ENCODE measurements at regions of chr2 and their contacts with region 1.

Region 1: GRCh38 chr2:219498280-219499057 is at the start of gene GMPPA:
- DNase-seq: peak; percentile 95 to 99
- H3K4me3 ChIP-seq: peak within 1 kb of the TSS; percentile 68 to 85
- H3K27ac ChIP-seq: peak within 1 kb of the TSS; percentile 91 to 99
- H3K4me1 ChIP-seq: peaks cover 13 to 26% of the 10 kb centered on the region in 2 donors
- H3K27me3 ChIP-seq: no peaks in the 10 kb centered on the region
- CTCF ChIP-seq: peak in 1 of 3 experiments; percentile 27
- total RNA-seq, gene GMPPA: 11.4 TPM

Region 2: DNA sequence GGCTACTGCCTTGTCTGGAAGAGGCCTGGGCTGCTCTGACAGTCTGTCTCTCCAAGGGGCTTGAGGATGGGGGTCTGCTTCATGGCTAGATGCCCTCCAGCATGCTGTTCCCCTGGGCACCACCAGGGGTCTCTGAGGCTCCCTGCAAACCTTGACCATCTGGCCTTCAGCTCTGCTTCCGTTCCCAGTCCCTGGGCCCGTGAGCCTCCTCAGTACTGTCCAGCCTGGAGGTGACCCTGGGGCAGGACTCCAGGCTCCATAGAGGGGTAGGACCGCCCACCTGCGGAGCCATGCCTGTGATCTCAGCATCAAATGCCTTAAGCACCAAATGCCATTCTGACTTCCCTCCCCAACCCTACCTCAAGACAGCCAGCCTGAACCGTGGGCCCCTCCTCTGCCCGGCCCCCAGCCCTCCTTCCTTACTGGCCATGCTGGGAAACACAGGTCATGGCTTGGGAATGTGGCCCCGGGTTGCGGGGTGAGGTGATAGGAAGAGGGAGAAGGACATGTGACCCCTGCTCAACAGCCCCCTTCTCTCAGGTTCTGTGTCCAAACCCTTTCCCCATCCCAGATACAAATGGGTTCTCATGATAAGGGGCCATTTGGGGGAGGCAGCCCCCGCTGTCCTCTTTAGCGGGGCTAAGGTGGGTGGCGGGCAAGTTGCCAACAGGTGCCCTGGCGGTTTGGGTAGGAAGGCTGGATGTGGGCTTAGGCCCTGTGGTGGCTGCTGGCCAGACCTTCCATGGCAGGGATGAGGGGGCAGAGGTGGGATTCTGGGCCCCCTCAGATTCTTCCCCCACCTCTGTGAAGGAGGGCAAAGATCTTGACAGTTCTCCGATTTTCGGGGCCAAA is 38.8 kb before region 1 on chr2:
- intact Hi-C with region 1: loop called (anchors 1 kb)
- DNase-seq: peak in 1 of 2 donors; percentile 87
- H3K4me3 ChIP-seq: peak overlapping the region in 1 of 2 donors; percentile 42
- H3K27ac ChIP-seq: peak overlapping the region; percentile 91 to 94
- H3K4me1 ChIP-seq: peaks cover 35 to 63% of the 10 kb centered on the region in 2 donors
- H3K27me3 ChIP-seq: no peaks in the 10 kb centered on the region
- CTCF ChIP-seq: peak; percentile 74 to 90 (median 84)

Region 3: DNA sequence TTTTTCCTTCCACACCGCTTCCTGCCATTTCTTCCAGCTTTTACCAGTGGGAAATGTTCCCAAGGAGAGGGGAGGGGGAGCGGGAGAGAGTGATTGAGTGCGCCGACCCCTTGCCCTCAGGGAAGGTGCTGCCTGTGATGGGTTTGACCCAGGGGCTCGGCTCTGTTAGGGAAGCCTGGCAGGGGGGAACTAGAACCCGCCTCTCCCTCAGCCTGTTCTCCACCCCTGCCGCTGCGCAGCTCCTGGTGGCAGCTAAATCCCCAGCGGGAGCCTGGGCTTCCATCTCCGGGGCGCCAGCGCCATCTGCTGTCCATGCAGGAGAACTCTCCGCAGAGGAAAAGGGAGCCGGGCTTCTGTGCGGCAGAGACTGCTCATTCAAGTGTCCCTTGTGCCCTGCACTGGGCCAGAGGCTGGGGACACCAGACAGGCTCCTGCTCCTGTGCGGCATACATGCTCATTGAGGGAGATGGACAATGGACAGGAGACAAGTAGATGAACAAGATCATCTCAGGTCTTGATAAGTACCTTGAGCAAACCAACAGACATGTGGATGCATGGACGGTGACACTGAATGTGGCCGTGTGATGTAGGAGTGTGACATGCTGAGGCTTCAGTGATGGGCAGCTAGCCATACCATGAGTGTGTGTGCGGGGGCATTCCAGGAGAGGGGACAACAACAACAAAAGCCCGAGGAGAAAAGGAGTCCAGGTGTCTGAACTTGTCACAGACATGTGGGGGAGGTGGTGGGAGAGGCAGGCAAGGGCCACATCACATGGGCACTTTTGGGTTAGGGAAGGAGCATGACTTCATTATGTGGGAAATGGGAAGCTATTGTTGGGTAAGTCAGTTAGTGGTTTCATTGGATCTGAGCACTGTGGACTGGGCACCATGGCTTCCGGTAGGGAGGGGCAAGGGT is 31.8 kb after region 1 on chr2:
- intact Hi-C with region 1: loop called (anchors 1 kb)
- DNase-seq: peak in 1 of 2 donors; percentile 88
- H3K4me3 ChIP-seq: peak overlapping the region in 1 of 2 donors; percentile 55
- H3K27ac ChIP-seq: no peak overlapping the region
- H3K4me1 ChIP-seq: no peaks in the 10 kb centered on the region
- H3K27me3 ChIP-seq: no peaks in the 10 kb centered on the region
- CTCF ChIP-seq: peak; percentile 97 to 99 (median 98)

Region 4: GRCh38 chr2:219543601-219544358 is 45.3 kb after region 1 on chr2 and contains the starts of genes CHPF and TMEM198:
- intact Hi-C with region 1: loop called (anchors 1 kb)
- DNase-seq: peak; percentile 96 to 99
- H3K4me3 ChIP-seq: peak within 1 kb of the TSS; percentile 87 to 90
- H3K27ac ChIP-seq: peak within 1 kb of the TSS; percentile 92 to 95
- H3K4me1 ChIP-seq: peaks cover 8 to 24% of the 10 kb centered on the region in 2 donors
- H3K27me3 ChIP-seq: no peaks in the 10 kb centered on the region
- CTCF ChIP-seq: no peak
- total RNA-seq, gene CHPF: 249 TPM
- total RNA-seq, gene TMEM198: 6.0 TPM

Measured in ascending aorta (tissue), 2 donors.